Adrenal gland (tissue), 19 donors: ENCODE measurements at regions of chr3 and their contacts with region 1.

Region 1: GRCh38 chr3:101868534-101869464 is 19.5 kb downstream of the NFKBIZ start:
- DNase-seq: no peak
- H3K4me3 ChIP-seq: no peak overlapping the region
- H3K27ac ChIP-seq: no peak overlapping the region
- H3K4me1 ChIP-seq: no peaks in the 10 kb centered on the region
- H3K27me3 ChIP-seq: no peaks in the 10 kb centered on the region
- CTCF ChIP-seq: no peak
- POLR2A ChIP-seq: no peak

Region 2: GRCh38 chr3:102224128-102224527 is 355.3 kb after region 1 on chr3:
- intact Hi-C with region 1: loop called in 1 of 2 experiments (anchors 5 kb)
- DNase-seq: no peak
- H3K4me3 ChIP-seq: no peak overlapping the region
- H3K27ac ChIP-seq: no peak overlapping the region
- H3K4me1 ChIP-seq: peaks cover 0 to 3% of the 10 kb centered on the region in 2 donors
- H3K27me3 ChIP-seq: no peaks in the 10 kb centered on the region
- CTCF ChIP-seq: peak in 4 of 6 experiments; percentile 14 to 33 (median 18)
- POLR2A ChIP-seq: no peak

Region 3: GRCh38 chr3:102570517-102570916 is 701.7 kb after region 1 on chr3:
- intact Hi-C with region 1: no loop called
- DNase-seq: no peak
- H3K4me3 ChIP-seq: no peak overlapping the region
- H3K27ac ChIP-seq: no peak overlapping the region
- H3K4me1 ChIP-seq: no peaks in the 10 kb centered on the region
- H3K27me3 ChIP-seq: no peaks in the 10 kb centered on the region
- CTCF ChIP-seq: no peak
- POLR2A ChIP-seq: no peak